ENCODE measurements at regions of chr6 and their contacts with region 1.

Region 1: DNA sequence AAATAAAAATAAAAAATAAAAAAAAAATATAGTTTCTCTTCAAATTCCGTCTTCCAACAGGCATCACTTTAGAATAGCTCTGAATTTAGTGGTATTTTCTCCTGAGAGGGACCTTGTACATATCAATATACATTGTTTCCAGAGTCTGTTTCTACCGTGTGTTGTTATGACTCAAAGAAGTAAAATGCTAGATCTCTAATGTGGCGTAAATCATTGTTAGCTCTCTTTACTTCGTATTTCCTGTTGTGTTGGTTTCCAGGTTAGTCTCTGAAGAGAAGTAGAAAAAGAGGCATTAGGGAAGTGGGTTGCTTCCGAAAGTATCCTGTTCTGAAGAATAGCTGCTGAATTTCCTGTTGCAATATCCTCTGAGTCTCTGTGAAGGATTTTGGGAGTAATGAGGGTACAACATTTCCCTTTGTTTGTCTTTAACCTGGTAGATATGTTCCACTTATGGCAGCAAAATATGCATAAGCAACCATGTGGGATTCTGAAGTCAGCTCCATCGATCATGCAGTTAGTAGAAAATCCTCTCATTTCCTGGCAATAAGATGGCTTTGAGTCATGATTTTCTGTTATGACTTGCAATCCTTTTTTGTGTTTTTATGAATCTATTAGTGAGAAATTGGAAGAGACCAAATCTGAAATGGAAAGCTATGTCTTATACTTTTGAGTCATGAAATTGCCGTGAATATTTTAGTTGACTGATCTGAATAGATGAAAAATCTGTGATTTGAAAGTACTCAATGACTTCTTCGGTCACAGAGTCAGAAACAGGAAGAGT is 42.0 kb upstream of the MCHR2 start:
- DNase-seq: peak in 1 of 2 experiments; percentile 53
- H3K4me3 ChIP-seq: no peak overlapping the region
- H3K27ac ChIP-seq: no peak overlapping the region
- H3K4me1 ChIP-seq: no peaks in the 10 kb centered on the region
- H3K27me3 ChIP-seq: no peaks in the 10 kb centered on the region
- CTCF ChIP-seq: no peak

Region 2: DNA sequence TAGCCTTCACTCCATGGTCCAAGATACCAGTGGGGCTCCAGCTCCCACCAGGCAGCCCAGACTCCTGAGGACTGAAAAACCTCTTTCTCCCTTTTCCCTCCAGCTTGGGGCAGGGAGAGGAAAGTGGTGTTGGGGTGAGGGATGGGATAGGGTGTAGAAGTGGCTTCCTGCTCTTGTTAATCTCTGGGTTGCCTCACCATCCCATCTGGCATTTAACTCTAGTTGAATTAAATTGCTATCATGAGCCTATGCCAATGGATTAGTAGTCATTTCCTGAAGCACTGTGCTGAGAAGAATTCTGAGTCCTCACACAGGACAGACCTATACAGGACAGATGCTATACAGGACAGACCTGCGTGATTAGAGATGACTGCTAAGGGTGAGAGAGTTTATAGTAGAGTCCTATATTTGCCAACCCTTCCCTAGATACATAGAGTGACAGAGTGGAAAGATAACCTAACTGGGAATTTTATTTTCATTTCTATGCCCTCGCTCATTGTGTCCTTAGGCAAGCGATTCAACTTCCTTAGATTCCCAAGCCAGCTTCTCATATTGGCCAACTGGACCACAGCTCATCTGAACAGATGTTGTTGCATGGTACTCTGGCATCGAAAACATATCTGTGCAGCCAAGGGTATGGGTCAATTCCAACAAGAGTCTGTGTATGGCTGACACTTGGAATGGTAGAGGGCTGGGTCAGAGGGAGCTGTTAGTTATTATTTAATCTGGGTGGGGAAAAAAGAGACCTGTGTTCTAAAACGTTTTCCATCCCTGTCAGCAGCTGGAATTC is 84.9 kb before region 1 on chr6:
- CTCF ChIA-PET with region 1: no interaction called
- POLR2A ChIA-PET with region 1: no interaction called
- intact Hi-C with region 1: no loop called
- DNase-seq: no peak
- H3K4me3 ChIP-seq: no peak overlapping the region
- H3K27ac ChIP-seq: no peak overlapping the region
- H3K4me1 ChIP-seq: no peaks in the 10 kb centered on the region
- H3K27me3 ChIP-seq: no peaks in the 10 kb centered on the region
- CTCF ChIP-seq: no peak

Region 3: DNA sequence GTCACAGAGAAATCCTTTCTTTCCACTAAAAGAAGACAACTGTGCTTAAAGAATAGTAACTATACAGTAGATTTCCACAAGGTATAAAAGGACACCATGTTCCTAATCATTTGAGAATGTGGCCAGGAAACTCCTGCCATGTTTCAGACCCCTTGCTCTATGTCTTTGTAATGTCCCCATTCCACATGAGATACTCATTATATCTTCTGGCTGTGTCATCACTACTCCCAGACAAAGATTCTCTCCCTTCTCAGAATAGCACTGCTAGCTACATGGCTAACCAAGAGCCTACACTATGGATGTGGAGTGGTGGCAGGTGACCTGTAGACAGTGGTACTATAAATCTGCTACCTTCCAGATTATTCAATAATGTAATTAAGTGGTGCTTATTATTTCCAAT is 176.1 kb after region 1 on chr6:
- CTCF ChIA-PET with region 1: no interaction called
- POLR2A ChIA-PET with region 1: interaction called, 11 read pairs
- intact Hi-C with region 1: no loop called
- DNase-seq: no peak
- H3K4me3 ChIP-seq: no peak overlapping the region
- H3K27ac ChIP-seq: no peak overlapping the region
- H3K4me1 ChIP-seq: peaks cover 16% of the 10 kb centered on the region
- H3K27me3 ChIP-seq: no peaks in the 10 kb centered on the region
- CTCF ChIP-seq: no peak

Measured in PC-9 (cell line).